ENCODE measurements at regions of chr12 and their contacts with region 1.

Region 1: DNA sequence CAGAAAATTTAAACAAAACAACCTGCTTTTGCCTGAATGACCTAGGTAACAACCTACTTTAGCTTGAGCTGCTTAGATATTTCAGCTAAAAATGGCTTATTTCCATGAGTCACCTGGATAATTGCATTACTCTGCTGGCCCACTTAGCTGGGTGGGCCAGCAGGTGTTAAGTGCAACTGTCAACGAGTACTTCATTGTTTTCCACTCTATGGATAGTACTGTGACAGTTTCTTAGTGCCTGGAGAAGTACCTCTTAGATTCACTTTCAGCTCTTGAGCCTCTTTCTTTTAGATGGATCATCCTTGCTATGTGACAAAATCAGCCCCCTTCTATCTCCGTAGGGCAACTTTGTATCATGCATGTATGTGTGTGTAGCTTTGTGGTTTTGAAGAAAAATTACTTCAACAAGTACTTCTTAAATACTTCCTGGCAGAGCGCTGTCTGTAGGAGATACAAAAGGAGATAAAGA is 368.2 kb upstream of the ATP2B1 start:
- DNase-seq: peak; percentile 82
- H3K4me3 ChIP-seq: no peak overlapping the region
- H3K27ac ChIP-seq: peak overlapping the region; percentile 87
- H3K4me1 ChIP-seq: peaks cover 66% of the 10 kb centered on the region
- CTCF ChIP-seq: no peak

Region 2: DNA sequence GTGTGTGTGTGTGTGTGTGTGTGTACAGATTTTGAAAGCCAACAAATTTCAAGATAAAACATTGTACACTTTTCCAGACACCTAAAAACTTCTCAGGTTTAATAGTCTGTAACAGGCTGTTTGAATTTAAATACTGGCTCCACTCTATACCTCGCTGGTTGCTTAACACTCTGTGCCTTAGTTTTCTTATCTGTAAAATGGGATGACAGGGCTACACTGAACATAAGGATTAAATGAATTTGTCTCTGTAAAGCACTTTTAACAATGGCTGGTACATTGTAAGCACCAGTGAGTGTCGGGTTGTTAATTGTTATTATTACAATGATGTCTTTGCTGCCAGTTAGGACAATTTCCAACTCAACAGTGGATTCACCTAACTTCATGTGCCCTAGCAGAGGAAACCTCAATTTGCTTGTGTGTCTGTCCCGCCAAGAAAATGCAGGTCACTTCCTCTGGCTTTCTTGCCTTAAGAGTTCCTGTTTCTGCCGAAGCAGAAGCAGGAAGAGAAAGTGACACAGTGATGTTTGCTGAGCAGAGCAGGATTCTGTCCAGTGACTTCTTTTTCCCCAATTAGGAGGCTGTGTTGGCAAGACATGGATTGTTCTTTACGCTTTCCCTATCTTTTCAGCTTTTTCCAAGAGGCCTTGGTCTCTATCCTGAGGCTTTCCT is 214.2 kb before region 1 on chr12:
- CTCF ChIA-PET with region 1: no interaction called
- POLR2A ChIA-PET with region 1: interaction called, 12 read pairs
- intact Hi-C with region 1: loop called (anchors 5 kb)
- DNase-seq: peak; percentile 91
- H3K4me3 ChIP-seq: peak overlapping the region; percentile 49
- H3K27ac ChIP-seq: peak overlapping the region; percentile 78
- H3K4me1 ChIP-seq: peaks cover 63% of the 10 kb centered on the region
- CTCF ChIP-seq: no peak

Region 3: DNA sequence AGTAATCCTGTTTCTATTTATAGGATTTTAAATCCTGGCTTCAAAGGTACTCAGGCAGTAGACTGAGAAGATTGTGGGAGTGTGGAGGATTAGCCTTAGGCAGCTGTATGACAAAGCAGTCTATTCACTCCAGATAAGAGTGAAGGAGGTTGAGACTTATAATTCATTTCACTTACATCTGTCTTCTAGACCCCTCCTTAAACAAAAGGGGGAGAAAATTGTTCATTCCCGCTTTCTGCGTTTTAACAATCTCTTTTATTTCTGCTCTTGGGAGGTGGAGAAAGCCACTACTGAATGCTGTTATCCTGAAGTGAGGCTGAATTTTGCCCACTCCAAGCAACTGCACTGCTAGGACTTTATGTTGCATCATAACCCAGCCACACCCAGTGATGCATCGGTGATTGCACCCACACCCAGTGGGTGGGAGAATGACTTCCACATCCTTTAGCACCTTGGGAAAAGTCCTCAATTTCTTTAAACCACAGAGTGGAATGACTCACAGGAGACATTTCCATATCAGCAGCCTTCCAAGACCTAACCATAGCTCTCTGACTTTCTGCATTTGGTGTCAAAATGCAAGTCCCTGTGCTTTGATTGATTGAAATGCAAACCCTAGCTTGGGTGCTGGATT is 14.3 kb after region 1 on chr12:
- CTCF ChIA-PET with region 1: no interaction called
- POLR2A ChIA-PET with region 1: interaction called, 17 read pairs
- intact Hi-C with region 1: no loop called
- DNase-seq: no peak
- H3K4me3 ChIP-seq: no peak overlapping the region
- H3K27ac ChIP-seq: no peak overlapping the region
- H3K4me1 ChIP-seq: peaks cover 10% of the 10 kb centered on the region
- CTCF ChIP-seq: no peak

Region 4: DNA sequence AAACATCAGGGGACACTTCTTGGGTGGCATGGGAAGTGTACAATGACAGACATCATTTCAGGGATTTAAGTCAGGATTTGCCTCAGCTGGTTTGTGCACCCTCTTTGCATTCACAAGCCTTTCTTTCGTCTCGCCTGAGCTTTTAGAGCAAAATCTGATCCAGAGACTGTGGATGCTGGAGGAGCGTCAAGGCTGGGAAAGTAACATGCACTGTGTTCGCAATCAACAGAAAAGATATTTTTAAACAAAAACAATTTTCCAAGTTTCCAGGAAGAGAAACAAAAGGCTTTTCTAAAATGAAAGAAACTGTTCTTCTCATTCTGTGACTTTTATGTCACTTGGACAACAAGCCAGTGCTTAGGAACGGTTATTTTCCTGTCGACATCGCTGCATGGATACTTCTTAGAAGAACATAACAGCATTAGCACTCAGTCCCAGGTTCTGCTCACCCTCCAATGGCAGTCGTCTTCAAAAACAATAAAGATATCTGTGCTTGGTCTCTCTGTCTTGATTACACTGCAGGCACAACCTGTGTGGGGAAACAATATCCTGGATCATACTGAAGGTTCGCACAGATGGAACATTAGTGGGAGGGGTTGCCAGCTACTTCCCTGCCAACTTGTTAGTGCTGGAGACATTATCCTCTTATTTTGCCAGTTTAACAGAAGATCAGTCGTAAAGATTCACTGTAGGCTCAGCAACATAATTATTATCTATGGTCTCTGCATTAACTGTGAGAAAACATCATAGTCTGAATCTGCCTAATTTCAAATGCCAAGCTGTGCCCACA is 35.1 kb after region 1 on chr12:
- CTCF ChIA-PET with region 1: no interaction called
- POLR2A ChIA-PET with region 1: interaction called, 11 read pairs
- intact Hi-C with region 1: no loop called
- DNase-seq: no peak
- H3K4me3 ChIP-seq: no peak overlapping the region
- H3K27ac ChIP-seq: no peak overlapping the region
- H3K4me1 ChIP-seq: no peaks in the 10 kb centered on the region
- CTCF ChIP-seq: no peak

Region 5: GRCh38 chr12:90390947-90391346 is 314.1 kb after region 1 on chr12:
- CTCF ChIA-PET with region 1: no interaction called
- POLR2A ChIA-PET with region 1: no interaction called
- intact Hi-C with region 1: no loop called
- DNase-seq: no peak
- H3K4me3 ChIP-seq: no peak overlapping the region
- H3K27ac ChIP-seq: no peak overlapping the region
- H3K4me1 ChIP-seq: no peaks in the 10 kb centered on the region
- CTCF ChIP-seq: no peak

Measured in OCI-LY7 (cell line).